ENCODE measurements at regions of chr1 and their contacts with region 1.

Region 1: GRCh38 chr1:66452162-66452561 is 81.8 kb upstream of the SGIP1 start:
- DNase-seq: no peak
- ATAC-seq: no peak
- H3K4me3 ChIP-seq: no peak overlapping the region
- H3K27ac ChIP-seq: no peak overlapping the region
- H3K4me1 ChIP-seq: no peaks in the 10 kb centered on the region
- H3K27me3 ChIP-seq: no peaks in the 10 kb centered on the region
- CTCF ChIP-seq: no peak

Region 2: GRCh38 chr1:65958561-65959350 is 493.4 kb before region 1 on chr1:
- intact Hi-C with region 1: loop called in 2 of 3 experiments (anchors 10 kb)
- DNase-seq: no peak
- ATAC-seq: peak in 3 of 4 donors; percentile 70 to 85 (median 79)
- H3K4me3 ChIP-seq: no peak overlapping the region
- H3K27ac ChIP-seq: no peak overlapping the region
- H3K4me1 ChIP-seq: no peaks in the 10 kb centered on the region
- H3K27me3 ChIP-seq: peaks cover 0 to 10% (median 7%) of the 10 kb centered on the region in 4 donors
- CTCF ChIP-seq: peak; percentile 18 to 58 (median 36)

Region 3: GRCh38 chr1:66317248-66317515 is 135.0 kb before region 1 on chr1:
- intact Hi-C with region 1: no loop called
- DNase-seq: no peak
- ATAC-seq: peak in 1 of 4 donors; percentile 20
- H3K4me3 ChIP-seq: no peak overlapping the region
- H3K27ac ChIP-seq: peak overlapping the region in 3 of 4 donors; percentile 51 to 74 (median 61)
- H3K4me1 ChIP-seq: peaks cover 0 to 18% (median 17%) of the 10 kb centered on the region in 3 donors
- H3K27me3 ChIP-seq: peaks cover 0 to 49% (median 4%) of the 10 kb centered on the region in 4 donors
- CTCF ChIP-seq: no peak

Region 4: GRCh38 chr1:66633159-66633558 is 181.0 kb after region 1 on chr1:
- intact Hi-C with region 1: no loop called
- DNase-seq: no peak
- ATAC-seq: no peak
- H3K4me3 ChIP-seq: no peak overlapping the region
- H3K27ac ChIP-seq: no peak overlapping the region
- H3K4me1 ChIP-seq: no peaks in the 10 kb centered on the region
- H3K27me3 ChIP-seq: peaks cover 0 to 3% (median 0%) of the 10 kb centered on the region in 4 donors
- CTCF ChIP-seq: no peak

Region 5: GRCh38 chr1:66916320-66916719 is 464.2 kb after region 1 on chr1:
- intact Hi-C with region 1: no loop called
- DNase-seq: no peak
- ATAC-seq: no peak
- H3K4me3 ChIP-seq: no peak overlapping the region
- H3K27ac ChIP-seq: no peak overlapping the region
- H3K4me1 ChIP-seq: no peaks in the 10 kb centered on the region
- H3K27me3 ChIP-seq: no peaks in the 10 kb centered on the region
- CTCF ChIP-seq: no peak